ENCODE measurements at regions of chr16 and their contacts with region 1.

Region 1: DNA sequence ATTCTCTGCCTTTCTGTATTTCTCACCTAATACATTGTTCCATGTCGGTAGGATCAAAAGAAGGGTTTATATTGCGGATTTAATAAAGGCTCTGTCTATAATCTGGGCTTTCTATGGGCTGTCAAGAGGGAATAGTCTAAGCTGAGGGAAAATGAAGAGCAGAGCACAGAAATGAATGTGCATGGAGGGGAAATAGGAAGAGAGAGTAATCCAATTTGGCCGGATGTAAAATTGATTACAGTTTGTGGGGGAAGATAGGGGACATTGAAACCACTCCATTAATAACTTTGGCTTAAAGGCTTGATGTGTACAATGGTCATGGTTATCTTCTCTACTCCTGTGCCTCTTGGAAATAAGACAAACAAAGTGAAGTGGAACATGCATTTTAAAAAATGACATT is 334.2 kb upstream of the CDH8 start:
- DNase-seq: no peak

Region 2: GRCh38 chr16:63174801-63175200 is 804.4 kb after region 1 on chr16:
- intact Hi-C with region 1: loop called in 1 of 2 experiments (anchors 5 kb)
- DNase-seq: no peak

Measured in posterior vena cava (tissue), 2 donors.